BJ (cell line): ENCODE measurements at regions of chr1 and their contacts with region 1.

Region 1: DNA sequence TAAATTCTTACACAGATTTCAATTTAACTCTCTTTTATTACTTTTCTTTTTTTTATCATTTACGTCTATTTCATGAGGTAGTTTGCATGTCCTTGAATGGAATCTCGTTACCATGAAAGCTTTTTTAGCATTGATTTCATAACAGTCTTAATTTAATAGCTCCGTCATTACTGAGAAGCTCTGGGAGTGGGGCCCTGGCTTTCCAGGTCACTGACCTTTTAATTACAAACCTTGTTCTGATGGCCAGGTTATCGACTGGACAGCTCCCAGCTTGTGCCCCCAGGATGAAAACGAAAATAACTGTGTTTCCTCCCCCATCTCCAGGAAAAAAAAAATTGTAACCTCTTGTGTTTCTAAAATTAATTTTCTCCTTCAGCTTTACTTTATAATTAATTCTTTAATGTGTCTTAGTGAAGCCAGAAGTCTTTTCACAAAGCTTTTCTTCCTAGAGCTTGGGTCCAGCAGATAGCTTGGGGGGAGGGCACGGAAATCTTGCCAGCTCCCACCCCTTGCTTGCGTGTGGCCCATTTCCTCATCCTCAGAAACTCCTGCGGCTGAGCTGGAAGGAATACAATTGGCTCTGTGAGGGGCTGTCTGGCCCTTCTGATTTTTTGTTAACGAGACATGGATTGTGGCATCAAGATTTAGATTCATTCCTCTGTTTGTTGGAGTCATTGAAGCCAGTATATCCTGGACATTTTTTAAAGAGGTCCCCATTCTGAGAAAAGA is 65.7 kb downstream of the PEX14 start:
- DNase-seq: no peak
- H3K4me3 ChIP-seq: no peak overlapping the region
- H3K27me3 ChIP-seq: no peaks in the 10 kb centered on the region
- CTCF ChIP-seq: no peak

Region 2: DNA sequence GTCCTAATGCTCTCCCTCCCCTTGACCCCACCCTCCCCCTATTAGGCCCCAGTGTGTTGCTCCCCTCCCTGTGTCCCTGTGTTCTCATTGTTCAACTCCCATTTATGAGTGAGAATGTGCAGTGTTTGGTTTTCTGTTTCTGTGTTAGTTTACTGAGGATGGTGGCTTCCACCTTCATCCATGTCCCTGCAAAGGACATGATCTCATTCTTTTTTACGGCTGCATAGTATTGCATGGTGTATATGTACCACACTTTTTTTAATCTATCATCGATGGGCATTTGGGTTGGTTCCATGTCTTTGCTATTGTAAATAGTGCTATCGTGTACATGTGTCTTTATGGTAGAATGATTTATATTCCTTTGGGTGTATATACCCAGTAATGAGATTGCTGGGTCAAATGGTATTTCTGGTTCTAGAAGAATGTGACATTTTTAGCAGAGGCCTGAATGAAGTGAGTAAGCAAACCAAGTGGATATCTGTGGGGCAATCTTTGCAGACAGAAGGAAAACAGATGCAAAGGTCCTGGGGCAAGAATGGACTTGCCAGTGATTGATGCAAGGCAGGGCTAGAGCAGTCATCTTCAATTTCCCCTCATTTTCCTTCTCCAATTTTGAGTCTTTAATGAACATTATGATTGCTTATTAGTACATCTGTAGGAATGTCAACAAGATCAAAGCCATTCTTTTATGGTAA is 457.5 kb before region 1 on chr1:
- CTCF ChIA-PET with region 1: no interaction called
- POLR2A ChIA-PET with region 1: no interaction called
- DNase-seq: peak; percentile 51
- H3K4me3 ChIP-seq: no peak overlapping the region
- H3K27me3 ChIP-seq: no peaks in the 10 kb centered on the region
- CTCF ChIP-seq: no peak

Region 3: DNA sequence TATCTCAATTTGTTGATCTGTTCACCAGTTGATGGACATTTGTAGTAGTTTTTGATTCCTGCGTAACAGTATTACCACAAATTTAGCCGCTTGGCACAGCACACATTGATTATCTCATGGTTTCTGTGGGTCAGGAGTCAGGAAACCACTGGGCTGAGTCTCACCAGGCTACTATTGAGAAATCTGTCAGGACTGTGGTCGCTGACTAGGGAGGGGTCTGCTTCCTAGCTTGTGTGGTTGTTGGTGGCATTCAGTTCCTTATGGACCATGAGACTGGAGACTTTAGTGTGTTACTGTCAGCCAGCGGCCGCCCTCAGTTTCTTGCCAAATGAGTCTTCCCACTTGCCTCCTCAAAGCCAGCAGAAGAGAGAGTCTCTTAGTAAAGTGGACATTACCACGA is 55.9 kb before region 1 on chr1:
- CTCF ChIA-PET with region 1: no interaction called
- POLR2A ChIA-PET with region 1: interaction called, 15 read pairs
- DNase-seq: no peak
- H3K4me3 ChIP-seq: no peak overlapping the region
- H3K27me3 ChIP-seq: no peaks in the 10 kb centered on the region
- CTCF ChIP-seq: no peak